ENCODE measurements at regions of chr22 and their contacts with region 1.

Region 1: GRCh38 chr22:20174785-20175596 is 24.1 kb upstream of the CCDC188 start:
- DNase-seq: peak; percentile 9
- ATAC-seq: peak; percentile 87
- H3K4me3 ChIP-seq: no peak overlapping the region
- H3K27ac ChIP-seq: no peak overlapping the region
- H3K4me1 ChIP-seq: no peaks in the 10 kb centered on the region
- H3K27me3 ChIP-seq: peaks cover 37% of the 10 kb centered on the region
- CTCF ChIP-seq: peak; percentile 39
- POLR2A ChIP-seq: no peak
- RAD21 ChIP-seq: peak; percentile 46

Region 2: GRCh38 chr22:20268279-20269012 is 93.5 kb after region 1 on chr22 and contains the start of gene RTN4R:
- CTCF ChIA-PET with region 1: no interaction called
- POLR2A ChIA-PET with region 1: no interaction called
- dilution Hi-C with region 1: no loop called
- in situ Hi-C with region 1: no loop called
- intact Hi-C with region 1: loop called (anchors 5 kb)
- DNase-seq: peak; percentile 19
- ATAC-seq: peak; percentile 96
- H3K4me3 ChIP-seq: peak within 1 kb of the TSS; percentile 20
- H3K27ac ChIP-seq: no peak within 1 kb of the TSS
- H3K4me1 ChIP-seq: no peaks in the 10 kb centered on the region
- H3K27me3 ChIP-seq: peaks cover 27% of the 10 kb centered on the region
- CTCF ChIP-seq: peak; percentile 87
- POLR2A ChIP-seq: no peak
- RAD21 ChIP-seq: peak; percentile 84
- total RNA-seq, gene RTN4R: 0.18 and 0.28 TPM in 2 replicates

Region 3: DNA sequence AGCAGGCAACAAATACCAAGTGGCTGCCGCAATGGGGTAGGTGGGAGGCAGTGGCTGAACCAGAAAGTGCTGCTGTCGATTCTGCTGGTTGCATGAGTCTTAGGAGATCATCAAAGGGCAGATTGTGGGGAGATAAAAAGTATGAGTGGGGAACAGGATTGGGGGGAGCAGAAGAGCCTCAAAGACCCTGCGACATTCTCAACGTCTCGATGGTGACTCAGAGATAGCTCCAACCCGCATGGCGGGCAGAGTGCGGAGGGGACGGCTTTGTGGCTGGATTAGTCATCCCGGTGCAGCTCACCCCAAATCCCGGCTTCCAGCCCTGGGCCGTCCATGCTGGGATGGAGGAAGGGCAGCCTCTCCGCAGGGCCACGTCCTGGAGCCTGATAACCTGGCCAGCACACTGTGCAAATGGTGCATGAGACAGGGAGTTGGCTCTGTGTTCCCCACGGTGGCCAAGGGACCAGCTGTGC is 104.7 kb after region 1 on chr22:
- CTCF ChIA-PET with region 1: no interaction called
- POLR2A ChIA-PET with region 1: no interaction called
- dilution Hi-C with region 1: no loop called
- in situ Hi-C with region 1: loop called (anchors 5 kb)
- intact Hi-C with region 1: no loop called
- DNase-seq: peak; percentile 54
- ATAC-seq: peak; percentile 72
- H3K4me3 ChIP-seq: no peak overlapping the region
- H3K27ac ChIP-seq: no peak overlapping the region
- H3K4me1 ChIP-seq: no peaks in the 10 kb centered on the region
- H3K27me3 ChIP-seq: peaks cover 14% of the 10 kb centered on the region
- CTCF ChIP-seq: no peak
- POLR2A ChIP-seq: no peak
- RAD21 ChIP-seq: no peak

Measured in IMR-90 (cell line).